ENCODE measurements at regions of chr17 and their contacts with region 1.

Region 1: DNA sequence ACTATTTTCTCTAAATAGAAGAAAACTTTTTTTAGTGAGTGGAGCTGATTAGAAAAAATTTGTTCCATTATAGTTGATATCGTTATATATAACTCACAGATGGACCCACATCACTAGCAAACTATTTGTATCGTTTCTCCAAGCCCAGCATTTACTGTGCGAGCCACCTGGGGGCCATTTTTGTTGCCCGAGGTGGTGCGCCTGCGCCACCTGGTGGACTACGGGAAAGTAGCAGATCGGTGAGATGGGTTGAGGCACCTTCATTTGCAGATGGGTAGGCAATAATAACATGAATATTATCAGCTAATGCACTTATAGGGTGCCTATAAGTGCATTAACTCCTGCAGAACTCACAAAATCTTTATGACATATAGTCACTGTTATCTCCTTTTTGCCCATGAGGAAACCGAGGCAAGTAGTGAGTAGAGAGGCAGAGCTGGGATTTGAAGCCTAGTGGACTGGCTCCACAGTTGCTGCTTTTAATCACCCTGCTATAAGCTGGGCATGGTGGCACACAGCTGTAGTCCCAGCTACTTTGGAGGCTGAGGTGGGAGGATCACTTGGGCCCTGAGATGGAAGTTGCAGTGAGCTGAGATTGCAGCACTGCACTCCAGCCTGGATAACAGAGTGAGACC is 23.2 kb upstream of the NTN1 start:
- DNase-seq: peak; percentile 61 to 90 (median 80)
- ATAC-seq: peak; percentile 85
- H3K4me3 ChIP-seq: no peak overlapping the region
- H3K4me3 Mint-ChIP-seq: no peak overlapping the region
- H3K27ac ChIP-seq: no peak overlapping the region
- H3K27ac Mint-ChIP-seq: no peak overlapping the region
- H3K4me1 ChIP-seq: peaks cover 5% of the 10 kb centered on the region
- H3K4me1 Mint-ChIP-seq: peaks cover 12% of the 10 kb centered on the region
- H3K27me3 ChIP-seq: peaks cover 7 to 14% of the 10 kb centered on the region in 2 experiments
- H3K27me3 Mint-ChIP-seq: peaks cover 32% of the 10 kb centered on the region
- CTCF ChIP-seq: peak; percentile 99

Region 2: DNA sequence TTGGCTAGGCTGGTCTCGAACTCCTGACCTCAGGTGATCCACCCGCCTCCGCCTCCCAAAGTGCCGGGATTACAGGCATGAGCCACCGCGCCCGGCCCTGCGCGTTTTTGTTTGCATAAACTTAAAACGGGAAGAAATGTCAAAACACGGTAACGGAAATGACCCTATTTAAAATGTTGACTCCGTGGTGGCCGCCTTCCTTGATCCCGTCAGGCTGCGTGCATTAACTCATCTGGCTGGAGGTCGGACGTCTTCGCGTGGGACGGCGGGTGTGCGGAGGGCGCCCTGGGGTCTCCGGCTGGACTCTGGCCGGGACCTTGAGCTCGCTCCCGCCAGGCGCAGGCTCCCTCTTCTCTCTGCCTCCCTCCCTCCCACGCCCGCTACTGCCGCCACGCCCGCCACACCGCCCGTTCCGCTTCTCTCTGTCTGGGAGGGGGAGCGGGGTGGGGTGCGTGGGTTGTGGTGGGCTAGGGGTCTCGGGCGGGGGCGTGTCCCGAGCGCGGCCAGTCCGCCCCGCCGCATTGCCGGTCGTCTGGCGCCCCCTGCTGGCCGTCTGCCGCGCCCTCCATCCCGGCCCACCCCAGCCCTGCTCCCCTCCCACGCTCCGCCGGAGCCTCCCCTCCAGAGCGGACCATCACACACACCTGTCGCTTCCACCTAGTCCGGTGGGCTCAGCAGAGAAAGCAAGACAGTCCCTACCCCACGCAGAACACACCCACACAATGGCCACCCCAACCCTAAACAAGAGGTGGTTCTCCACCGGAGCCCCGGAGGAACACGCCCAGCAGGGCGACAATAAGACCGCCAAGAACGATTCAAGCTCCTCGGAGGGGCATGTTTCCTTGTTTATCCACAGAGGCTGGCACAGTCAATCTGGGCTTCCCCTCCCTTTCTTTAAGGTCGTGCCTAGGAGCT is 252.3 kb before region 1 on chr17:
- CTCF ChIA-PET with region 1: interaction called, 14 read pairs
- POLR2A ChIA-PET with region 1: no interaction called
- intact Hi-C with region 1: loop called in 1 of 2 experiments (anchors 2 kb)
- DNase-seq: peak; percentile 56 to 91 (median 82)
- ATAC-seq: peak; percentile 72
- H3K4me3 ChIP-seq: peak overlapping the region; percentile 74 to 77
- H3K4me3 Mint-ChIP-seq: peak overlapping the region; percentile 94
- H3K27ac ChIP-seq: peak overlapping the region; percentile 69 to 82
- H3K27ac Mint-ChIP-seq: peak overlapping the region; percentile 94
- H3K4me1 ChIP-seq: peaks cover 15% of the 10 kb centered on the region
- H3K4me1 Mint-ChIP-seq: peaks cover 25% of the 10 kb centered on the region
- H3K27me3 ChIP-seq: no peaks in the 10 kb centered on the region
- H3K27me3 Mint-ChIP-seq: no peaks in the 10 kb centered on the region
- CTCF ChIP-seq: peak; percentile 94

Region 3: GRCh38 chr17:8785547-8786413 is 212.3 kb before region 1 on chr17:
- CTCF ChIA-PET with region 1: interaction called, 40 read pairs
- POLR2A ChIA-PET with region 1: no interaction called
- intact Hi-C with region 1: loop called (anchors 1 to 5 kb)
- DNase-seq: peak; percentile 27 to 73 (median 60)
- ATAC-seq: peak; percentile 56
- H3K4me3 ChIP-seq: no peak overlapping the region
- H3K4me3 Mint-ChIP-seq: no peak overlapping the region
- H3K27ac ChIP-seq: no peak overlapping the region
- H3K27ac Mint-ChIP-seq: no peak overlapping the region
- H3K4me1 ChIP-seq: no peaks in the 10 kb centered on the region
- H3K4me1 Mint-ChIP-seq: no peaks in the 10 kb centered on the region
- H3K27me3 ChIP-seq: peaks cover 0 to 2% of the 10 kb centered on the region in 2 experiments
- H3K27me3 Mint-ChIP-seq: no peaks in the 10 kb centered on the region
- CTCF ChIP-seq: peak; percentile 83

Region 4: GRCh38 chr17:8894673-8895578 is 103.2 kb before region 1 on chr17:
- CTCF ChIA-PET with region 1: interaction called, 50 read pairs
- POLR2A ChIA-PET with region 1: interaction called, 4 read pairs
- intact Hi-C with region 1: loop called (anchors 2 kb)
- DNase-seq: peak in 7 of 9 experiments; percentile 30 to 79 (median 60)
- ATAC-seq: peak; percentile 35
- H3K4me3 ChIP-seq: no peak overlapping the region
- H3K4me3 Mint-ChIP-seq: no peak overlapping the region
- H3K27ac ChIP-seq: no peak overlapping the region
- H3K27ac Mint-ChIP-seq: peak overlapping the region; percentile 29
- H3K4me1 ChIP-seq: peaks cover 56% of the 10 kb centered on the region
- H3K4me1 Mint-ChIP-seq: peaks cover 56% of the 10 kb centered on the region
- H3K27me3 ChIP-seq: no peaks in the 10 kb centered on the region
- H3K27me3 Mint-ChIP-seq: no peaks in the 10 kb centered on the region
- CTCF ChIP-seq: peak; percentile 76

Region 5: DNA sequence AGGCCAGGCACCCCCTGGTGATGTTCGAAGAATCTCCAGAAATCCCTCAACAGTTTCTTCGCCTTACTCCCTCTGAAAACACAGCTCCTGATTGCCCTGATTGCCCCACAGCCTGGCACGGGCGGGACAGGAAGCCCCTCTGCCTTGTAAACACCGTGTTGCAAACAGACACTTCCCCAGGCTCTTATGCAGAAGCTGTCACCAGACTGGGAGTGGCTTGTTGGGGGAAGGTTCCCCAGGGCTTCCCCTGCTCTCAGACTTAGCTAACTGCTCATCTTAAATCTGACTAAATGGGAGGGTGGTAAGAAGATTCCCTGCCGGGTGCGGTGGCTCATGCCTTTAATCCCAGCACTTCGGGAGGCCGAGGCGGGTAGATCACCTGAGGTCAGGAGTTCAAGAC is 43.8 kb before region 1 on chr17:
- CTCF ChIA-PET with region 1: interaction called, 11 read pairs
- POLR2A ChIA-PET with region 1: no interaction called
- intact Hi-C with region 1: loop called in 1 of 2 experiments (anchors 5 kb)
- DNase-seq: peak; percentile 67 to 96 (median 83)
- ATAC-seq: peak; percentile 92
- H3K4me3 ChIP-seq: peak overlapping the region in 1 of 2 experiments; percentile 4
- H3K4me3 Mint-ChIP-seq: peak overlapping the region; percentile 83
- H3K27ac ChIP-seq: peak overlapping the region; percentile 40 to 85
- H3K27ac Mint-ChIP-seq: peak overlapping the region; percentile 99
- H3K4me1 ChIP-seq: peaks cover 89% of the 10 kb centered on the region
- H3K4me1 Mint-ChIP-seq: peaks cover 97% of the 10 kb centered on the region
- H3K27me3 ChIP-seq: no peaks in the 10 kb centered on the region
- H3K27me3 Mint-ChIP-seq: no peaks in the 10 kb centered on the region
- CTCF ChIP-seq: no peak

Region 6: GRCh38 chr17:8986290-8986689 is 11.8 kb before region 1 on chr17:
- CTCF ChIA-PET with region 1: interaction called, 12 read pairs
- POLR2A ChIA-PET with region 1: no interaction called
- intact Hi-C with region 1: no loop called
- DNase-seq: no peak
- ATAC-seq: no peak
- H3K4me3 ChIP-seq: no peak overlapping the region
- H3K4me3 Mint-ChIP-seq: no peak overlapping the region
- H3K27ac ChIP-seq: no peak overlapping the region
- H3K27ac Mint-ChIP-seq: no peak overlapping the region
- H3K4me1 ChIP-seq: peaks cover 13% of the 10 kb centered on the region
- H3K4me1 Mint-ChIP-seq: peaks cover 14% of the 10 kb centered on the region
- H3K27me3 ChIP-seq: no peaks in the 10 kb centered on the region
- H3K27me3 Mint-ChIP-seq: no peaks in the 10 kb centered on the region
- CTCF ChIP-seq: peak; percentile 21

Region 7: DNA sequence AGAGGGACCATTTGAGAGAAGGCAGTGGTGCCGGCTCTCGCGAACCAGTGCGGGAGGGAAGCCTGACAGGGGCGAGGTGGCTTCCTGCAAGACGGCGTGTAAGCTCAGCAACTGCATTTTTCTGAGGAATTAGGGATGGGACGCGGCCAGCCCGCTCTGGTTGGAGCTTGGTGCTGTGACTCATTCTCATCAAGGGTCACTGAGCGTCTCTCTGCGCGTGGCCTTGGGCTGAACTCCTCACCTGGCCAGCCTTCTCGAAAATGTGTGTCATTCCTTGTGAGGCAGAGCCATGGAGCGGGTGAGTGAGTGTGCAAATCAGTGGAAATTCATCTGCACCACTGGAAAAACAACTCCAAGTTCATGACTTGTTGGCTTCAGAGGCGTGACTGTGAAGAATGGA is 76.0 kb after region 1 on chr17:
- CTCF ChIA-PET with region 1: no interaction called
- POLR2A ChIA-PET with region 1: no interaction called
- intact Hi-C with region 1: no loop called
- DNase-seq: no peak
- ATAC-seq: no peak
- H3K4me3 ChIP-seq: no peak overlapping the region
- H3K4me3 Mint-ChIP-seq: no peak overlapping the region
- H3K27ac ChIP-seq: no peak overlapping the region
- H3K27ac Mint-ChIP-seq: no peak overlapping the region
- H3K4me1 ChIP-seq: peaks cover 7% of the 10 kb centered on the region
- H3K4me1 Mint-ChIP-seq: peaks cover 16% of the 10 kb centered on the region
- H3K27me3 ChIP-seq: no peaks in the 10 kb centered on the region
- H3K27me3 Mint-ChIP-seq: peaks cover 7% of the 10 kb centered on the region
- CTCF ChIP-seq: no peak

Region 8: DNA sequence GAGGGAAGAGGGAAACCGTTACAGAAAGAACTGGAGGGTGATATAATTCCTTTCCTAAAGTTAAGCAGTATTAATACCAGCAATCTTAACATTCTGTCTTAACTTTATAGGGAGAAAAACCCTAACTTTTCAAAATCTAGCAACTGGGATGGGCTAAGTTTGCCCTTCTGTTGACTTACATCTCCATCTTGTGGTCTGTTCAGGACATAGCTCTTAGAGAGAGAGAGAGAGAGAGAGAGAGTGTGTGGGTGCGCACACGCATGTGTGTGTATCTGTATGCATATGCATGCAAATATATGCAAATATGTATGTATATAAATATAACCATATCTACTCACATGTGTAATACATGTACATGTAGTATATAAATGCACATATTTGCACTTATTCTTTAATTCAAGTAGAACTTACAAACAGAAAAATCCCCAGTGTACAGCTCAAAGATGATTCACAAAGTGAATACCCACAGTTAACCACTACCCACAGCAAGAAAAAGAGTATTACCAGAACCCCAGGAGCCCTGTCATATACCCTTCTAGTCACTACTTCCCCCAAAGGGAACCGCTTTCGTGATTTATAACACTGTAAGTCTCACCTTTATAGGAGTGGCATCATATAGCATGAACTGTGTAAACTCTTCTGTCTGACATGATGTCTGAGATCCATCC is 531.1 kb after region 1 on chr17:
- CTCF ChIA-PET with region 1: no interaction called
- POLR2A ChIA-PET with region 1: no interaction called
- intact Hi-C with region 1: loop called (anchors 5 to 10 kb)
- DNase-seq: peak in 2 of 9 experiments; percentile 16 to 33
- ATAC-seq: no peak
- H3K4me3 ChIP-seq: no peak overlapping the region
- H3K4me3 Mint-ChIP-seq: no peak overlapping the region
- H3K27ac ChIP-seq: no peak overlapping the region
- H3K27ac Mint-ChIP-seq: no peak overlapping the region
- H3K4me1 ChIP-seq: no peaks in the 10 kb centered on the region
- H3K4me1 Mint-ChIP-seq: no peaks in the 10 kb centered on the region
- H3K27me3 ChIP-seq: no peaks in the 10 kb centered on the region
- H3K27me3 Mint-ChIP-seq: no peaks in the 10 kb centered on the region
- CTCF ChIP-seq: no peak

Region 9: GRCh38 chr17:9684955-9685621 is 687.0 kb after region 1 on chr17:
- CTCF ChIA-PET with region 1: no interaction called
- POLR2A ChIA-PET with region 1: no interaction called
- intact Hi-C with region 1: no loop called
- DNase-seq: no peak
- ATAC-seq: no peak
- H3K4me3 ChIP-seq: no peak overlapping the region
- H3K4me3 Mint-ChIP-seq: no peak overlapping the region
- H3K27ac ChIP-seq: no peak overlapping the region
- H3K27ac Mint-ChIP-seq: no peak overlapping the region
- H3K4me1 ChIP-seq: no peaks in the 10 kb centered on the region
- H3K4me1 Mint-ChIP-seq: no peaks in the 10 kb centered on the region
- H3K27me3 ChIP-seq: no peaks in the 10 kb centered on the region
- H3K27me3 Mint-ChIP-seq: no peaks in the 10 kb centered on the region
- CTCF ChIP-seq: no peak

Measured in CD8-positive, alpha-beta T cell (primary cell).